ENCODE measurements at regions of chr11 and their contacts with region 1.

Region 1: GRCh38 chr11:31240338-31240904 is 129.1 kb downstream of the DCDC1 start:
- DNase-seq: peak in 6 of 9 donors; percentile 10 to 22 (median 15)
- ATAC-seq: no peak
- H3K4me3 ChIP-seq: no peak overlapping the region
- H3K4me3 Mint-ChIP-seq: no peak overlapping the region
- H3K27ac ChIP-seq: no peak overlapping the region
- H3K27ac Mint-ChIP-seq: no peak overlapping the region
- H3K4me1 ChIP-seq: no peaks in the 10 kb centered on the region
- H3K4me1 Mint-ChIP-seq: no peaks in the 10 kb centered on the region
- H3K27me3 ChIP-seq: peaks cover 0 to 3% of the 10 kb centered on the region in 2 donors
- H3K27me3 Mint-ChIP-seq: peaks cover 0 to 8% (median 0%) of the 10 kb centered on the region in 5 donors

Region 2: DNA sequence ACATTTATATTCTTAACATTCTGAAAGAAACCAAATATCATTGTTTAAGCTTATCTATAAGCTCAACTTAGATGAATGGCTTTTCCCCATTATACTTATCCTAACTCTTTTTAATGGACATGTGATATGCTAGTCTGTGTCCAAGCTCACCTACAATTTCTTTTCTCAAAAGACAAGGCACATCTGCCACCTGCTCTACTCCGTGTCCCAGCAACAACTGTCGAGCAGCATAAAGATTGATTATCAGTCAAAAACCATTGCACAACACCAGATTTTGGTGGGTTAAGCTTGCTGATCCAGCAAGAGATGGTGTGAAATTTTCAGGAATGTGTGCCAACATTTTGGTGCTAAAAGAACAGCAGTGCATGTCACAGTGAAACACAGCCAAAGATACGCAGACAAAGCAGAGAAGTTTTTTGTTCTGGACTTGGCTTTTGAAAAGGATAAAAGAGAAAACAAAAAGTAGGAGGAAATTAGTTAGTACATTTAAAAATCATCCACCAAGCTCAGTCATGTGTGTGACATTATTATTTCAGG is 63.3 kb after region 1 on chr11:
- CTCF ChIA-PET with region 1: no interaction called
- POLR2A ChIA-PET with region 1: no interaction called
- intact Hi-C with region 1: no loop called
- DNase-seq: no peak
- ATAC-seq: no peak
- H3K4me3 ChIP-seq: no peak overlapping the region
- H3K4me3 Mint-ChIP-seq: no peak overlapping the region
- H3K27ac ChIP-seq: no peak overlapping the region
- H3K27ac Mint-ChIP-seq: no peak overlapping the region
- H3K4me1 ChIP-seq: no peaks in the 10 kb centered on the region
- H3K4me1 Mint-ChIP-seq: peaks cover 0 to 1% (median 0%) of the 10 kb centered on the region in 7 donors
- H3K27me3 ChIP-seq: no peaks in the 10 kb centered on the region
- H3K27me3 Mint-ChIP-seq: peaks cover 0 to 6% (median 4%) of the 10 kb centered on the region in 5 donors

Region 3: GRCh38 chr11:31397239-31397834 is 156.9 kb after region 1 on chr11:
- CTCF ChIA-PET with region 1: interaction called, 3 read pairs
- POLR2A ChIA-PET with region 1: no interaction called
- intact Hi-C with region 1: loop called in 1 of 2 experiments (anchors 5 kb)
- DNase-seq: peak in 5 of 9 donors; percentile 18 to 38 (median 35)
- ATAC-seq: peak; percentile 37
- H3K4me3 ChIP-seq: no peak overlapping the region
- H3K4me3 Mint-ChIP-seq: no peak overlapping the region
- H3K27ac ChIP-seq: no peak overlapping the region
- H3K27ac Mint-ChIP-seq: no peak overlapping the region
- H3K4me1 ChIP-seq: no peaks in the 10 kb centered on the region
- H3K4me1 Mint-ChIP-seq: peaks cover 0 to 7% (median 6%) of the 10 kb centered on the region in 7 donors
- H3K27me3 ChIP-seq: no peaks in the 10 kb centered on the region
- H3K27me3 Mint-ChIP-seq: no peaks in the 10 kb centered on the region

Region 4: DNA sequence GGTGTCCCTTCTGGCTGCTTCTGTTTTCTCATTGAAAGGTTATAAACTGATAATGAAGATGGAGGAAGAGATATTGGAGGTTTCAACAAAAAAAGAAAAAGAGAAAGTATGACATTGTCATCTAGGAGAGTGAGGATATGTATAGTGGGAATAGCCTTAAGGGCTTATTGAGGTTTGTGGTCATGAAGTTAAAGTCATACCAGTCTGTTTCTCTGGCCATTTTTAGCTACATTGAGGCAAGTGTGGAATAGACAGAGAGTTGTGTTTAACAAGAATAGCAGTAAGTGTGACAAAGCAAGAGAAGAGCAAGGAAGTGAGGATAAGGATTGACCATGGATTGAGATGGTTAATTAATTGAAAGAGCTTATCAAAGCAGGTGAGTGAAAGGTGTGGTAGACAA is 379.6 kb after region 1 on chr11:
- CTCF ChIA-PET with region 1: no interaction called
- POLR2A ChIA-PET with region 1: no interaction called
- intact Hi-C with region 1: loop called in 1 of 2 experiments (anchors 10 kb)
- DNase-seq: no peak
- ATAC-seq: no peak
- H3K4me3 ChIP-seq: no peak overlapping the region
- H3K4me3 Mint-ChIP-seq: no peak overlapping the region
- H3K27ac ChIP-seq: no peak overlapping the region
- H3K27ac Mint-ChIP-seq: no peak overlapping the region
- H3K4me1 ChIP-seq: no peaks in the 10 kb centered on the region
- H3K4me1 Mint-ChIP-seq: peaks cover 0 to 7% (median 0%) of the 10 kb centered on the region in 7 donors
- H3K27me3 ChIP-seq: no peaks in the 10 kb centered on the region
- H3K27me3 Mint-ChIP-seq: no peaks in the 10 kb centered on the region

Region 5: DNA sequence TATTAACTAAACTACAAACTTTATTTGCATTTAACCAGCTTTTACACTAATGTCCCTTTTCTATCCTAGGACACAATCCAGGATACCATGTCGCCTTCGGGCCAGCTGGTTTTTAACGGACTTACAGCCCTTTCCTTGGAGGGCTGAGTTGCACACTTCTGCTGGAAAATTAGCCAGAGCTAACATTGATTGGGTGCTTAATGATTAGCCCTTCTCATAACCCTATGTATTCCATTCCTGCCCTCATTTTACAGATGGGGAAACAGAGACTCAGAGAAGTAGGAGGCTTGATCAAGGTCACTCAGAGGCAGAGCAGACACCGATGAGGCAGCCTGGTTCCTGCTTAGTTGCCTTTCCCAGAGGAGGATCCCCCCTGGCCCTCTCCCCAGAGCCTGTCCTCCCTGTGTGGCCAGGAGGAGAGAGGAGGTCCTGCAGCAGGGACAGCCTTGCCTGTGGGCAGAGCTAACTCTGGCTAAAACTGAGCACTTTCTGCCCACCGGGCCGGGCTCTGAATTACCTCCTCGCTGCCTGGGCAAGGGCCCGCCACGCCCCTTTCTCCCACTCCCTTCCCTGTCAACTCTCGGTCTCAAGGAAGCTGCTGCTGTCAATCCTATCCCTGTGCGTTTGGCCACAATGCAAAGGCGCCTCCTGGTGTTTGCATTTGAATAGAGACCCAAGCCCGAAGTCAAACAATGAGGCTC is 630.3 kb after region 1 on chr11:
- CTCF ChIA-PET with region 1: no interaction called
- POLR2A ChIA-PET with region 1: no interaction called
- intact Hi-C with region 1: loop called in 1 of 2 experiments (anchors 5 kb)
- DNase-seq: peak in 2 of 9 donors; percentile 2 to 4
- ATAC-seq: no peak
- H3K4me3 ChIP-seq: no peak overlapping the region
- H3K4me3 Mint-ChIP-seq: no peak overlapping the region
- H3K27ac ChIP-seq: no peak overlapping the region
- H3K27ac Mint-ChIP-seq: no peak overlapping the region
- H3K4me1 ChIP-seq: no peaks in the 10 kb centered on the region
- H3K4me1 Mint-ChIP-seq: no peaks in the 10 kb centered on the region
- H3K27me3 ChIP-seq: no peaks in the 10 kb centered on the region
- H3K27me3 Mint-ChIP-seq: peaks cover 21 to 56% (median 42%) of the 10 kb centered on the region in 5 donors

Region 6: GRCh38 chr11:32006799-32007388 is 766.5 kb after region 1 on chr11:
- CTCF ChIA-PET with region 1: interaction called, 4 read pairs
- POLR2A ChIA-PET with region 1: no interaction called
- intact Hi-C with region 1: loop called (anchors 1 kb)
- DNase-seq: peak in 5 of 9 donors; percentile 4 to 27 (median 7)
- ATAC-seq: peak; percentile 64
- H3K4me3 ChIP-seq: no peak overlapping the region
- H3K4me3 Mint-ChIP-seq: peak overlapping the region in 1 of 10 donors; percentile 2
- H3K27ac ChIP-seq: no peak overlapping the region
- H3K27ac Mint-ChIP-seq: no peak overlapping the region
- H3K4me1 ChIP-seq: no peaks in the 10 kb centered on the region
- H3K4me1 Mint-ChIP-seq: peaks cover 0 to 5% (median 0%) of the 10 kb centered on the region in 7 donors
- H3K27me3 ChIP-seq: no peaks in the 10 kb centered on the region
- H3K27me3 Mint-ChIP-seq: peaks cover 17 to 40% (median 35%) of the 10 kb centered on the region in 5 donors

Region 7: GRCh38 chr11:32052218-32052617 is 811.8 kb after region 1 on chr11:
- CTCF ChIA-PET with region 1: interaction called, 3 read pairs
- POLR2A ChIA-PET with region 1: no interaction called
- intact Hi-C with region 1: loop called in 1 of 2 experiments (anchors 5 kb)
- DNase-seq: peak; percentile 5 to 51 (median 42)
- ATAC-seq: peak; percentile 45
- H3K4me3 ChIP-seq: no peak overlapping the region
- H3K4me3 Mint-ChIP-seq: no peak overlapping the region
- H3K27ac ChIP-seq: no peak overlapping the region
- H3K27ac Mint-ChIP-seq: no peak overlapping the region
- H3K4me1 ChIP-seq: no peaks in the 10 kb centered on the region
- H3K4me1 Mint-ChIP-seq: peaks cover 0 to 2% (median 0%) of the 10 kb centered on the region in 7 donors
- H3K27me3 ChIP-seq: no peaks in the 10 kb centered on the region
- H3K27me3 Mint-ChIP-seq: peaks cover 28 to 70% (median 47%) of the 10 kb centered on the region in 5 donors

Region 8: DNA sequence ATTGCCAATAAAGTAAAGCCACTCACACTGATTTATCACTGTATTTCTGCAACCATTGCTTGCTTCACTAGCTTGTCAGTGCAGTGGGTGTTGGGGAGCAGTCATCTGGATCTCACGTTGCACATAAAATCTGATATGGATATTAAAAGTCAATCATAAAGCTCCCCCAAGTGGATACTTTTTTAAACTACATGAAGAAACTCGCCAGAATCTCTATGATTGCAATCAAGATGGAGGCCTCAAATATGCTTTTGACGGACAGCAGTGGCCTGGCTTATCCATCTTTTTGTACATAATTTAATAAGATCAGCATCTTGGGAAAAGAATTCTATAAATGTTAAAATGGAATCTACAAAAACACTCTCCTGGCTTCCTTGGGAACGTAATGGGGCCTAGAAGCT is 1057.2 kb after region 1 on chr11:
- CTCF ChIA-PET with region 1: interaction called, 3 read pairs
- POLR2A ChIA-PET with region 1: no interaction called
- intact Hi-C with region 1: loop called in 1 of 2 experiments (anchors 5 kb)
- DNase-seq: peak in 2 of 9 donors; percentile 2 to 5
- ATAC-seq: no peak
- H3K4me3 ChIP-seq: no peak overlapping the region
- H3K4me3 Mint-ChIP-seq: no peak overlapping the region
- H3K27ac ChIP-seq: no peak overlapping the region
- H3K27ac Mint-ChIP-seq: peak overlapping the region in 1 of 9 donors; percentile 65
- H3K4me1 ChIP-seq: no peaks in the 10 kb centered on the region
- H3K4me1 Mint-ChIP-seq: peaks cover 0 to 5% (median 0%) of the 10 kb centered on the region in 7 donors
- H3K27me3 ChIP-seq: no peaks in the 10 kb centered on the region
- H3K27me3 Mint-ChIP-seq: peaks cover 0 to 10% (median 2%) of the 10 kb centered on the region in 5 donors